AG04449 (cell line): ENCODE measurements at regions of chr1 and their contacts with region 1.

Region 1: GRCh38 chr1:172719694-172720138 is 60.8 kb downstream of the FASLG start:
- DNase-seq: no peak
- H3K4me3 ChIP-seq: no peak overlapping the region
- CTCF ChIP-seq: peak; percentile 51

Region 2: DNA sequence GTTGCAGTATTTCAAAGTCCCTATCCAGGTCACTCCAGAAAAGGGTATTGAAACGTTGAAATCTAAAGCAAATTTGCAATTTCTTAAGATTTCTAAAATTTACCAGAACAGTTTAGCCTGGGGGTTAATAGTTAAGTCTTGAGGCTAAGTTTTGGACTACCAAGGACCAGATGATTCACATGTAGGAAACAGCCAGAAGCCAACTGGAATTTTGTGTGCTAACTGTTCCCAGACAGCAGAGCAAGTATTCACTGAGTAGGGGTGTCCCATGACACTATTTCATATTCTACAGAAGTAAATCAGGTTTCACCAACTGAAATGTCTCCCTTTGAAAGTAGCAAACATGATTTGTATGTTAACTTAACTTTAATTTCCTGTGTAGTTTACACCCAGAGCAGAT is 310.8 kb before region 1 on chr1:
- CTCF ChIA-PET with region 1: no interaction called
- POLR2A ChIA-PET with region 1: no interaction called
- DNase-seq: no peak
- H3K4me3 ChIP-seq: no peak overlapping the region
- CTCF ChIP-seq: no peak

Region 3: GRCh38 chr1:172443626-172444453 is 275.9 kb before region 1 on chr1 and contains the start of gene PIGC:
- CTCF ChIA-PET with region 1: interaction called, 62 read pairs
- POLR2A ChIA-PET with region 1: no interaction called
- DNase-seq: no peak
- H3K4me3 ChIP-seq: peak within 1 kb of the TSS; percentile 89
- CTCF ChIP-seq: peak; percentile 98

Region 4: GRCh38 chr1:172449585-172450534 is 269.9 kb before region 1 on chr1:
- CTCF ChIA-PET with region 1: interaction called, 62 read pairs
- POLR2A ChIA-PET with region 1: no interaction called
- DNase-seq: no peak
- H3K4me3 ChIP-seq: no peak overlapping the region
- CTCF ChIP-seq: peak; percentile 70

Region 5: GRCh38 chr1:172545396-172546004 is 174.2 kb before region 1 on chr1:
- CTCF ChIA-PET with region 1: interaction called, 12 read pairs
- POLR2A ChIA-PET with region 1: no interaction called
- DNase-seq: no peak
- H3K4me3 ChIP-seq: no peak overlapping the region
- CTCF ChIP-seq: no peak

Region 6: GRCh38 chr1:172588296-172589291 is 131.1 kb before region 1 on chr1:
- CTCF ChIA-PET with region 1: interaction called, 10 read pairs
- POLR2A ChIA-PET with region 1: no interaction called
- DNase-seq: peak; percentile 38
- H3K4me3 ChIP-seq: no peak overlapping the region
- CTCF ChIP-seq: no peak

Region 7: DNA sequence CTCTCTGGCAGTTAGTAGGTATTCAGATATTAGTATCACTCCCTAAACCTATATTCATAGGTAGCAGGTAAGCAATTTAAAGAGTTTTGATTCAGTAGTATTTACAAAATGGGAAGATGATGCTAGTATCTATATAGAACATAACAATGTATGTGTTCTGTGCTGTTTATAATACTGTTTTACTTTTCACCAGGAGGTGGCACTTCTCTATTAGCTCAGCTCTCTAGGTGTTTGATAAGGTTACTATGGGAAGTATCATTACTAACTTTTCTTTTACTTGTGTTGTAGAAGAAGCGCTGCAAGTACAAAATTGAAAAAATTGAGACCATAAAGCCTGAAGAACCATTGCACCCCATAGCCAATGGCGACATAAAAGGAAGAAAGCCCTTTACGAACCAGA is 110.2 kb before region 1 on chr1:
- CTCF ChIA-PET with region 1: interaction called, 139 read pairs
- POLR2A ChIA-PET with region 1: no interaction called
- DNase-seq: no peak
- H3K4me3 ChIP-seq: no peak overlapping the region
- CTCF ChIP-seq: peak; percentile 6

Region 8: GRCh38 chr1:172708452-172708851 is 11.3 kb before region 1 on chr1:
- CTCF ChIA-PET with region 1: interaction called, 11 read pairs
- POLR2A ChIA-PET with region 1: no interaction called
- DNase-seq: no peak
- H3K4me3 ChIP-seq: no peak overlapping the region
- CTCF ChIP-seq: no peak